ENCODE measurements at regions of chr6 and their contacts with region 1.

Region 1: DNA sequence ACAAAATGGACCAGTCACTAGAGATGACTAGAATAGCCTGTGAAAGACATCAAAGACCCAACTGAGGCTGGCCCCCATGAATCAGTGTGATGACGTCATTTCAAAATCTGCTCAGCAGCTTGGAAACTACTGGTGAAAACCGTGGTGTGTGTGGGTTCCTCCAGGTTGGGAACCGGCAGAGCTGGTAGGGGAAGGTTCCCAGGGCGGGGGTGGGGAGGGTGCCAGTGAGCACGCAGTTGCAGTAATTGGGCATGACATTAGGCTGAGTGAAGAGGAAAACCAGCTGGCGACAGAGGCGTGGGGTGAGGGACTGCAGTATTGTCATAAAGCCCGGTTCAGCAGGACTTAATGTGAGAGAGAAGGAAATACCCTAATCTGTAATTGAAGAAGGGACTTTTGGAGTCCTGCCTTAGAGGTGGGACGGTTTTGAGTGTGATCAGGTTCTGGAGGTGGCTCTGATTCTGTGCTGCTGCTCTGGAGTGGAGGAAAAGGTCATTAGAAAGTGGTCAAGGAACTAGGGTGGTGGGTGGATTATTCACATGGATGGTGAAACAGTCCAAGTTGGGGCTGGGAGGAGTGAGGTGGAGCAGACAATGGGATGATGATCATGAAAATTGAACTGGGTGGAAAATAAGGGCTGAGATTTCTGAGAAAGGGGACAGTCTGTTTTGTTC is 52.0 kb upstream of the MTHFD1L start:
- DNase-seq: peak; percentile 72
- ATAC-seq: peak; percentile 32
- H3K4me3 ChIP-seq: peak overlapping the region; percentile 51
- H3K27ac ChIP-seq: peak overlapping the region; percentile 97
- H3K4me1 ChIP-seq: peaks cover 28% of the 10 kb centered on the region
- H3K27me3 ChIP-seq: no peaks in the 10 kb centered on the region
- CTCF ChIP-seq: no peak

Region 2: GRCh38 chr6:149934249-149935156 is 879.0 kb before region 1 on chr6:
- CTCF ChIA-PET with region 1: no interaction called
- POLR2A ChIA-PET with region 1: no interaction called
- intact Hi-C with region 1: loop called (anchors 1 kb)
- DNase-seq: peak; percentile 83
- ATAC-seq: peak; percentile 25; the same call in 1 of the 2 replicates
- H3K4me3 ChIP-seq: no peak overlapping the region
- H3K27ac ChIP-seq: no peak overlapping the region
- H3K4me1 ChIP-seq: peaks cover 17% of the 10 kb centered on the region; the same call in 1 of the 2 replicates
- H3K27me3 ChIP-seq: no peaks in the 10 kb centered on the region
- CTCF ChIP-seq: peak; percentile 78

Region 3: GRCh38 chr6:150068720-150069648 is 744.5 kb before region 1 on chr6 and contains the start of gene ULBP3:
- CTCF ChIA-PET with region 1: interaction called, 5 read pairs
- POLR2A ChIA-PET with region 1: no interaction called
- intact Hi-C with region 1: loop called (anchors 2 kb)
- DNase-seq: peak; percentile 93
- ATAC-seq: peak; percentile 88
- H3K4me3 ChIP-seq: peak within 1 kb of the TSS; percentile 92
- H3K27ac ChIP-seq: peak within 1 kb of the TSS; percentile 53
- H3K4me1 ChIP-seq: peaks cover 31% of the 10 kb centered on the region
- H3K27me3 ChIP-seq: no peaks in the 10 kb centered on the region
- CTCF ChIP-seq: peak; percentile 50; the same call in 1 of the 2 replicates
- total RNA-seq, gene ULBP3: 20.5 and 23.2 TPM in 2 replicates

Region 4: DNA sequence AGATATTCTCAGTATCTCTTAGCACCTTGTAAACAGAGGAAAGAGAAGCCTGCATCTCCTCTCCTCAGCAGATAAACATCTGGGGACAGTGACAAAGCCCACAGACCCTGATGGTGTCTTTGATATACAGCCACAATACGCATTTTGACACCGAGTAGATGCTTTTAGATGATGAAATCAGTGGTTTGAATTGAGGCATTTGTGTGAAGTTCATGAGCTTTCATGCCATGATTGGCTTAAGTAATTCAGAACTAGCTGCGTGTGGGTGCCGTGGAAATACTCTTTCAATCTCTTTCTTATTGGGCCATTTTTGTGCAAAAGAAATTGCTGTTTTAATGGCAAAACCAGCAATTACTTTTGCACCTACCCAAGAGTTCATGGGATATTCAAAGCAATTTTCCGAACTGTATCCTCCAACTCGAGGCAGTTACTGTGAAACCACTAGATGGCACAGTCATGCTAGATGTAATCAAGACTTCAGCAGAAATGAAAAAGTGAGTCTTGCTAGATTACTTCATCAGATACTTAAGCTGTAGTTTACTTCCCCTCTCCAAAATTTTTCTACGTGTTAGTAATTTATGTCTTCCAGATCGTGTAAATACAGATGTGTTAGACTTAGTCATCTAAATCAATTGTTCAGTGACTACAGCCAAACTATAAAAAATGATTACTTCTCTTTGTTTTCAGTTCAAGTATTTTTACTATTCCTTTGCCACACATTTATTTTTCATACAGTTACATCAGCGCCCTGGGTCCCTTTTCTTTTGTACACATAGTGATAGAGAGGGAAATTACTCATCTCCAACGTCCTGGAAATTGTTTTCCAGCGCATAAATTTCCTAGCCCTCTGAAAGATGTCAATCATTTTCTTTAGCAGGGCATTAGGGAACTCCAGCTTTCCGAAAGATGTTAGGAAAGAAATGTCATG is 395.3 kb before region 1 on chr6:
- CTCF ChIA-PET with region 1: interaction called, 16 read pairs
- POLR2A ChIA-PET with region 1: interaction called, 3 read pairs
- intact Hi-C with region 1: loop called (anchors 1 kb)
- DNase-seq: peak; percentile 86
- ATAC-seq: peak; percentile 89
- H3K4me3 ChIP-seq: peak overlapping the region; percentile 59
- H3K27ac ChIP-seq: peak overlapping the region; percentile 78
- H3K4me1 ChIP-seq: peaks cover 11% of the 10 kb centered on the region
- H3K27me3 ChIP-seq: no peaks in the 10 kb centered on the region
- CTCF ChIP-seq: peak; percentile 80

Region 5: DNA sequence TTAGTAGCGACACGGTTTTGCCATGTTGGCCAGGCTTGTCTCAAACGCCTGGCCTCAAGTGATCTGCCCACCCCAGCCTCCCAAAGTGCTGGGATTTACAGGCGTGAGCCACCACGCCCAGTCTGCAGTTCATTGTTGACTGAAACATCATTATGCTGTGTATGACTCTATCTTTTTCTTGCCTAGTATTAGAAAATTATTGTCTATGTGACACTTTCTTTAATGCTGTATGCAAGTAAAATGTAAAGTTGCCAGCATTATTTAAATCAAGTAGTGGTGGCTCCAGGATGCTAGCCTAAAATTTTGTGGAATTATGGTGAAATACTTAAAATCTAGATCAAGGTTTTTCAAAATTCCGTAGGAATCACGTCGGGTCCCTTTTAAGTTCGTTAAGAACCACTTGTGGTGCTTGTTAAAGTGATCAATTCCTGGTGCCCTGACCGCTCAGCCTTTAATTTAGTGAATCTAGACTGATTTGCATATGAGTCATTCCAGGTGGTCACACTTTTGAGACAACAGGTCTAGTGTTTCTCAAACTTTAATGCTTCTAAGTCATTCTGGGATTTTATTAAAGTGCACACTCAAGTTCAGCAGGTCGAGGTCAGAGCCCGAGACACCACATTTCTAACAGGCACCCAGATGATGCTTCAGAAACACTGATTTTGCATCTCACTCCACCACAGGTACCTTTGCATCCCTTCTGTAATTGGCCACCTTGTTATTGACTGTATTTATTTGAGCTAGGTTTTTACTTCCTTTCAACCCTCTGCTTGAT is 80.5 kb before region 1 on chr6:
- CTCF ChIA-PET with region 1: no interaction called
- POLR2A ChIA-PET with region 1: no interaction called
- intact Hi-C with region 1: no loop called
- DNase-seq: no peak
- ATAC-seq: no peak
- H3K4me3 ChIP-seq: no peak overlapping the region
- H3K27ac ChIP-seq: no peak overlapping the region
- H3K4me1 ChIP-seq: no peaks in the 10 kb centered on the region
- H3K27me3 ChIP-seq: no peaks in the 10 kb centered on the region
- CTCF ChIP-seq: no peak

Region 6: GRCh38 chr6:150865406-150866146 is 52.1 kb after region 1 on chr6 and contains the start of gene MTHFD1L:
- CTCF ChIA-PET with region 1: interaction called, 4 read pairs
- POLR2A ChIA-PET with region 1: no interaction called
- intact Hi-C with region 1: loop called (anchors 2 kb)
- DNase-seq: peak; percentile 78
- ATAC-seq: peak; percentile 68
- H3K4me3 ChIP-seq: peak within 1 kb of the TSS; percentile 87
- H3K27ac ChIP-seq: peak within 1 kb of the TSS; percentile 67
- H3K4me1 ChIP-seq: peaks cover 6% of the 10 kb centered on the region
- H3K27me3 ChIP-seq: no peaks in the 10 kb centered on the region
- CTCF ChIP-seq: peak; percentile 55
- total RNA-seq, gene MTHFD1L: 11.9 and 17.5 TPM in 2 replicates

Measured in PC-3 (cell line).